H1 (cell line): ENCODE measurements at regions of chr12 and their contacts with region 1.

Region 1: GRCh38 chr12:2944401-2945047 is 14.7 kb upstream of the TEAD4 start:
- DNase-seq: peak; percentile 71 to 94
- H3K4me3 ChIP-seq: no peak overlapping the region
- H3K27ac ChIP-seq: no peak overlapping the region
- H3K4me1 ChIP-seq: no peaks in the 10 kb centered on the region
- H3K27me3 ChIP-seq: no peaks in the 10 kb centered on the region; a peak in 1 of 7 replicates
- CTCF ChIP-seq: peak; percentile 93 to 100 (median 98)
- EP300 ChIP-seq: no peak
- POLR2A ChIP-seq: no peak
- RAD21 ChIP-seq: peak; percentile 97 to 98

Region 2: DNA sequence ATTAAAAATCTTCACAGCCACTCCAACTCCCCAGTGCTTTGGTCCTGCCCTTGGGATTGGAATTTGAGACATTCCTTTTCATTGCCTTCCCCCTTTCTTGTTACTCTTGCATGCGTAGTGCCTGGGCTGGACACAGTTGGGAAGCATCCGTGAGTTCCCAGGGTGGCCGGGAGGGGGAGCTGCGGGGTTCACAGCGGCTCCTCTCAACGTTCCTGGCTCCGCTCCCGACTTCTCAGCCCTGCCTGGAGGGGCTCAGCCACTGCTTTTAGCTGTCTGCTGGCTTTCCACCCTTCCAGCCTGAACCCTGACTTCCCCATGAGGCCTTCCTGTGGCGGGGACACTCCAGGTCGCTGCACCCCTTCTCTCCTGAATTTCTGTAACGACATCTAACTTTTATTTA is 90.9 kb before region 1 on chr12:
- CTCF ChIA-PET with region 1: interaction called, 54 read pairs
- POLR2A ChIA-PET with region 1: interaction called, 4 read pairs
- DNase-seq: peak; percentile 82 to 98
- H3K4me3 ChIP-seq: no peak overlapping the region
- H3K27ac ChIP-seq: no peak overlapping the region
- H3K4me1 ChIP-seq: peaks cover 0 to 6% (median under 1%) of the 10 kb centered on the region in 4 experiments; a peak in 4 of 7 replicates
- H3K27me3 ChIP-seq: no peaks in the 10 kb centered on the region
- CTCF ChIP-seq: peak; percentile 91 to 97 (median 93)
- EP300 ChIP-seq: peak in 1 of 2 experiments; percentile 20; a peak in 1 of 3 replicates
- POLR2A ChIP-seq: no peak
- RAD21 ChIP-seq: peak; percentile 68 to 73

Region 3: DNA sequence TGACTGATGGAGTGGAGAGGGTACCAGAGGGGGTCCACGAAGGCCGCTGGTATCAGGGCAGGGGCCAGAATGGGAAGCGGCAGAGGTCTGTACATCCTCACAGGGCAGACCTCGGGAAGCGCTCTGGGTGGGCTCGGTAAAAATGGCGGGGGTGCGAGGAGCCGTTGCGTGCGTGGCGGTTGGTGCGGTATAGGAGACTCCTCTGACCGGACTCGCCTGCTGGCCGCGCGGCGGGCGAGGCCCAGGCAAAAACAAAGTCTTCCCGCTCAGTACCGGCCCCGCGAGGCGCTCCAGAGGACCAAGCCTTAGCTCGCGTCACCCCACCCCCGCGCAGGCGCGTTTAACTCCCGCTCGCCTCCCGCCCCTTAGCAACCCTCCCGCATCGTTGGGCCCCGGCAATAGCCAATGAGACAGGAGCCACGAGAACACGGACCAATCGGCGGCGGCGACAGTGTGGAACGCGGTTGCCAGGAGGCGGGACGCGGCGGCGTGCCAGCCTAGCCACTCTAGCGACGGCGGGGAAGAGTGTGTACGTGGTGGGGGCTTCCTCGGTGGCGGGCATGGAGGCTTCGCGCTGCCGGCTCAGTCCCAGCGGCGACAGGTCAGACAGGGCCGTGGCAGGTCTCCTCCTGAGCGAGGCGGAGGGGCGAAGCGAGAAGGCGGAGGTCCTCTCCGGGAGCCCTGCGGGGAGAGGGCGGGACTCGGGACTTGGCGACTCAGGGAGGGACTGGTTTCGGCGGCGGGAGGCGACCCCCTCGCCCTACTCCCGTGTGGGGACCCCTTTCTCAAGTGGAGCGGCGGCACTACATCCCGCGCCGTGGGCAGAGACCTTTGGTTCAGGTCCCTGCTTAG is 53.9 kb before region 1 on chr12 and contains the start of gene TULP3:
- CTCF ChIA-PET with region 1: interaction called, 143 read pairs
- POLR2A ChIA-PET with region 1: interaction called, 9 read pairs
- DNase-seq: peak; percentile 78 to 98
- H3K4me3 ChIP-seq: peak within 1 kb of the TSS; percentile 71 to 88 (median 86)
- H3K27ac ChIP-seq: peak within 1 kb of the TSS; percentile 57; the same call in 1 of the 2 replicates
- H3K4me1 ChIP-seq: peaks cover 0 to 3% (median 2%) of the 10 kb centered on the region in 4 experiments; a peak in 3 of 7 replicates
- H3K27me3 ChIP-seq: no peaks in the 10 kb centered on the region
- CTCF ChIP-seq: no peak
- EP300 ChIP-seq: no peak
- POLR2A ChIP-seq: peak in 1 of 2 experiments; percentile 74; a peak in 2 of 3 replicates
- RAD21 ChIP-seq: no peak
- total RNA-seq, gene TULP3: 18.4 and 21.7 TPM in 2 replicates

Region 4: GRCh38 chr12:2924019-2924418 is 20.5 kb before region 1 on chr12:
- CTCF ChIA-PET with region 1: interaction called, 15 read pairs
- POLR2A ChIA-PET with region 1: no interaction called
- DNase-seq: no peak
- H3K4me3 ChIP-seq: no peak overlapping the region
- H3K27ac ChIP-seq: no peak overlapping the region
- H3K4me1 ChIP-seq: peaks cover 0 to 7% (median 2%) of the 10 kb centered on the region in 4 experiments; a peak in 5 of 7 replicates
- H3K27me3 ChIP-seq: no peaks in the 10 kb centered on the region
- CTCF ChIP-seq: no peak
- EP300 ChIP-seq: no peak
- POLR2A ChIP-seq: no peak
- RAD21 ChIP-seq: no peak

Region 5: GRCh38 chr12:2959505-2960389 is 15.2 kb after region 1 on chr12:
- CTCF ChIA-PET with region 1: interaction called, 7 read pairs
- POLR2A ChIA-PET with region 1: interaction called, 11 read pairs
- DNase-seq: peak in 1 of 2 experiments; percentile 73
- H3K4me3 ChIP-seq: peak overlapping the region; percentile 58 to 87 (median 72)
- H3K27ac ChIP-seq: peak overlapping the region; percentile 82; the same call in 1 of the 2 replicates
- H3K4me1 ChIP-seq: peaks cover 11 to 38% (median 21%) of the 10 kb centered on the region in 4 experiments
- H3K27me3 ChIP-seq: peaks cover 0 to 6% (median 3%) of the 10 kb centered on the region in 4 experiments; a peak in 4 of 7 replicates
- CTCF ChIP-seq: no peak
- EP300 ChIP-seq: no peak
- POLR2A ChIP-seq: peak in 1 of 2 experiments; percentile 11; a peak in 1 of 3 replicates
- RAD21 ChIP-seq: no peak

Region 6: GRCh38 chr12:3034067-3034750 is 89.7 kb after region 1 on chr12:
- CTCF ChIA-PET with region 1: interaction called, 14 read pairs
- POLR2A ChIA-PET with region 1: no interaction called
- DNase-seq: peak; percentile 54 to 92
- H3K4me3 ChIP-seq: no peak overlapping the region
- H3K27ac ChIP-seq: no peak overlapping the region
- H3K4me1 ChIP-seq: no peaks in the 10 kb centered on the region; a peak in 3 of 7 replicates
- H3K27me3 ChIP-seq: no peaks in the 10 kb centered on the region
- CTCF ChIP-seq: peak; percentile 78 to 92 (median 88)
- EP300 ChIP-seq: no peak
- POLR2A ChIP-seq: no peak
- RAD21 ChIP-seq: peak; percentile 77 to 83